ENCODE measurements at regions of chr15 and their contacts with region 1.

Region 1: GRCh38 chr15:30030350-30030749 is 52.4 kb upstream of the GOLGA8J start:
- DNase-seq: no peak
- H3K4me3 ChIP-seq: no peak overlapping the region
- H3K27ac ChIP-seq: no peak overlapping the region
- H3K4me1 ChIP-seq: no peaks in the 10 kb centered on the region
- H3K27me3 ChIP-seq: no peaks in the 10 kb centered on the region
- CTCF ChIP-seq: peak; percentile 30 to 34

Region 2: GRCh38 chr15:29668120-29668602 is 362.2 kb before region 1 on chr15:
- CTCF ChIA-PET with region 1: no interaction called
- dilution Hi-C with region 1: no loop called
- in situ Hi-C with region 1: no loop called
- intact Hi-C with region 1: loop called (anchors 1 kb)
- DNase-seq: peak; percentile 62
- H3K4me3 ChIP-seq: no peak overlapping the region
- H3K27ac ChIP-seq: no peak overlapping the region
- H3K4me1 ChIP-seq: peaks cover 22% of the 10 kb centered on the region
- H3K27me3 ChIP-seq: no peaks in the 10 kb centered on the region
- CTCF ChIP-seq: peak; percentile 45 to 54

Region 3: GRCh38 chr15:29747837-29748417 is 282.4 kb before region 1 on chr15:
- CTCF ChIA-PET with region 1: interaction called, 4 read pairs
- dilution Hi-C with region 1: no loop called
- in situ Hi-C with region 1: no loop called
- intact Hi-C with region 1: loop called (anchors 2 kb)
- DNase-seq: no peak
- H3K4me3 ChIP-seq: no peak overlapping the region
- H3K27ac ChIP-seq: no peak overlapping the region
- H3K4me1 ChIP-seq: no peaks in the 10 kb centered on the region
- H3K27me3 ChIP-seq: no peaks in the 10 kb centered on the region
- CTCF ChIP-seq: peak; percentile 37 to 42

Region 4: GRCh38 chr15:29935276-29936020 is 94.9 kb before region 1 on chr15:
- CTCF ChIA-PET with region 1: no interaction called
- dilution Hi-C with region 1: no loop called
- in situ Hi-C with region 1: no loop called
- intact Hi-C with region 1: no loop called
- DNase-seq: no peak
- H3K4me3 ChIP-seq: no peak overlapping the region
- H3K27ac ChIP-seq: peak overlapping the region; percentile 63
- H3K4me1 ChIP-seq: peaks cover 55% of the 10 kb centered on the region
- H3K27me3 ChIP-seq: no peaks in the 10 kb centered on the region
- CTCF ChIP-seq: peak in 1 of 2 donors; percentile 30

Region 5: GRCh38 chr15:29945943-29946596 is 84.3 kb before region 1 on chr15:
- CTCF ChIA-PET with region 1: no interaction called
- dilution Hi-C with region 1: no loop called
- in situ Hi-C with region 1: no loop called
- intact Hi-C with region 1: loop called (anchors 2 kb)
- DNase-seq: peak; percentile 97
- H3K4me3 ChIP-seq: no peak overlapping the region
- H3K27ac ChIP-seq: peak overlapping the region; percentile 80
- H3K4me1 ChIP-seq: peaks cover 19% of the 10 kb centered on the region
- H3K27me3 ChIP-seq: no peaks in the 10 kb centered on the region
- CTCF ChIP-seq: no peak